WTC11 (cell line): ENCODE measurements at regions of chr17 and their contacts with region 1.

Region 1: DNA sequence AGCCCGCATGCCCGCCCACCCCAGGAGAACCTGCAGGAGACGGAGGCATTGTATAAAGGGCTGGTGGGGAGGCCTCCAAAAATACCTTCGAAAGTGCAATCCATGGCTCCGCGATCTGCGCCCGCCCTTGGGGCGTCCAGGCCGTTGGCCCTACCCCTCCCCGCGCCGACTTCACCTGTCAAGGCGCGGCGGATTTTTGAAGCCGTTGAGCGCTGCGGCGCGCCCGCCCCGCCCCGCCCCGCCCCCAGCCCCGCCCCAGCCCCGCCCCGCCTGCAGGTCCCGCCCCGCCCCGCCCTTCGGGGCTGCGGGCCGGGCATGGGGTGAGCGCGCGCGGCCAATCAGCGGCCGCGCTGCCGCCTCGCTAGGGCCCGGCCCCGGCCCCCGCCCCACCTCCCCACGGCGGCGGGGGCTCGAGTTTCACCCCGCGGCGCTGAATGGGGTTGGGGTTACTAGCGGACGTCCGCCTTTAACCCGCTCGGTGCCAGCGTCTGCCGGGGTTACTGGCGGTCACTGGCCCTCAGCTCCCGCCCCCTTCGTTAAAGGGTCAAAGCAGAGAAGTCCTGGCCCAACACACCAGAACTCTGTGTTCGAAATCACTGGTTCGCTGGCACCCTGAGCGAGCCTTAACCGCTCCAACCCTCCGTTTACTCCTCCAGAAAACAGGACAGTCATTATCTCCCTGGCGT is 13.2 kb downstream of the SREBF1 start:
- DNase-seq: peak; percentile 96
- ATAC-seq: peak; percentile 87
- H3K4me3 Mint-ChIP-seq: peak overlapping the region; percentile 52
- H3K27ac Mint-ChIP-seq: peak overlapping the region; percentile 99
- H3K4me1 Mint-ChIP-seq: peaks cover 77% of the 10 kb centered on the region
- H3K27me3 Mint-ChIP-seq: no peaks in the 10 kb centered on the region
- CTCF ChIP-seq: no peak

Region 2: GRCh38 chr17:17591355-17592298 is 231.9 kb before region 1 on chr17 and contains the start of gene PEMT:
- CTCF ChIA-PET with region 1: no interaction called
- POLR2A ChIA-PET with region 1: interaction called, 13 read pairs
- DNase-seq: peak; percentile 95
- ATAC-seq: peak; percentile 98
- H3K4me3 Mint-ChIP-seq: peak within 1 kb of the TSS; percentile 95
- H3K27ac Mint-ChIP-seq: peak within 1 kb of the TSS; percentile 96
- H3K4me1 Mint-ChIP-seq: peaks cover 17% of the 10 kb centered on the region
- H3K27me3 Mint-ChIP-seq: no peaks in the 10 kb centered on the region
- CTCF ChIP-seq: no peak
- total RNA-seq, gene PEMT: 51.9 to 54.6 TPM (median 53.1 TPM) in 3 replicates

Region 3: GRCh38 chr17:17836250-17836817 is 12.8 kb after region 1 on chr17:
- CTCF ChIA-PET with region 1: interaction called, 8 read pairs
- POLR2A ChIA-PET with region 1: interaction called, 137 read pairs
- DNase-seq: peak; percentile 98
- ATAC-seq: peak; percentile 53
- H3K4me3 Mint-ChIP-seq: peak overlapping the region; percentile 69
- H3K27ac Mint-ChIP-seq: peak overlapping the region; percentile 94
- H3K4me1 Mint-ChIP-seq: peaks cover 70% of the 10 kb centered on the region
- H3K27me3 Mint-ChIP-seq: no peaks in the 10 kb centered on the region
- CTCF ChIP-seq: no peak

Region 4: DNA sequence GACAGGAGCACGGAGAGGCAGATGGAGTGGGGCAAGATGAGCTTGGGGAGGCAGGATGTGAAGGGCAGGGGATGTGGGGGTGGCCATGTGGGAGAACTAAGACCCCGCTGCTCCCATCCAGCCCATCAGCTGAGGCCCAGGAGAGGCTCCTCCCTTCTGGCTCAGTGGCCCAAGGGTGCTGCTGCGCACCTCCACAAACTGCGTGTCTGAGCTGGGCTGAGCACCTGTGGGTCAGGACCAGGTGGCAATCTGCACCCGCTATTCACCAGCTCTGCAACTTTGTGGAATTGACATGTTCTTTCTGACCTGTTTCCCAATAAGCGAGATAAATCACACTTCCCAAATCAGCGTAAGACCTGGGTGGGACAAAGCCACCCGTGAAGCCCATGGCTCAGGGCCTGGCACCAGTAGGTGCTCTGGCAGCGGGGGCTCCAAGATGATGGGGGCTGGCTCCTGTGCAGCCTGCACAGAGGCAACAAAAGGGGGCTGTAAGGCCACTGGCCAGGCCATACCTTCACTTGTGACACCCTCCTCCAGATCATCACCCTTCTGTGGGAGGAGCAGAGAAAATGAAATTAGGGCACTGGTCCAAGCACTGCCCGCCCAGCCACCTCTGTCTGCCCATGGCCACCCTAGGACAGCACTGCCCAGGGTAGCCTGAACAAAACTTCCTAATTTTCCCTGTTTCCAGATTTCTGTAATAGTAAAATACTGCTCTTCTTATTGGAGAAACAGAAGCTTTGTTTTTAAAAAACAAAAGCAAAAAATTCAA is 24.9 kb after region 1 on chr17:
- CTCF ChIA-PET with region 1: no interaction called
- POLR2A ChIA-PET with region 1: no interaction called
- DNase-seq: no peak
- ATAC-seq: no peak
- H3K4me3 Mint-ChIP-seq: no peak overlapping the region
- H3K27ac Mint-ChIP-seq: no peak overlapping the region
- H3K4me1 Mint-ChIP-seq: peaks cover 47% of the 10 kb centered on the region
- H3K27me3 Mint-ChIP-seq: peaks cover 3% of the 10 kb centered on the region; the same call in 1 of the 2 replicates
- CTCF ChIP-seq: no peak